OCI-LY7 (cell line): ENCODE measurements at regions of chr3 and their contacts with region 1.

Region 1: DNA sequence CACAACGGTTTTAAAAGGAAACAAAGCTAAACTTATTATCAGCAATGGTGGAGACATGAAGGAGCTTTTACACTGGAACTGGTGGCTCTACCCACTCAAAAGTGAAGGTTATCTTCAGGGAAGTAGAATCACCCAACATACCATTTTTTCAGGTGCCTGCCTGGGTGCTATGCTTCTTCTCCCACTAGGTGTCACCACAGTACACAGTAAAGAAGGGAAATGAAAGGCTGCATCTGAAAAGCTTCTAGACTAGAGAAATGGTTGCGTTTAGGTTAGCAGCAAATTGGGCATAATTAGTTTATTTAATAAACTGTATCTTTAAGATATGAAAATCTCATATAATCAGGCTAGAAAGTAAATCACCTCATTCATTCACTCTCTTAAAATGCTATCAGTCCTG is 47.0 kb upstream of the SELENOK start:
- DNase-seq: peak; percentile 54
- H3K4me3 ChIP-seq: no peak overlapping the region
- H3K27ac ChIP-seq: no peak overlapping the region
- H3K4me1 ChIP-seq: no peaks in the 10 kb centered on the region
- CTCF ChIP-seq: peak; percentile 91

Region 2: GRCh38 chr3:52171514-52172261 is 1767.0 kb before region 1 on chr3:
- CTCF ChIA-PET with region 1: no interaction called
- POLR2A ChIA-PET with region 1: no interaction called
- intact Hi-C with region 1: no loop called
- DNase-seq: no peak
- H3K4me3 ChIP-seq: no peak overlapping the region
- H3K27ac ChIP-seq: no peak overlapping the region
- H3K4me1 ChIP-seq: no peaks in the 10 kb centered on the region
- CTCF ChIP-seq: no peak

Region 3: DNA sequence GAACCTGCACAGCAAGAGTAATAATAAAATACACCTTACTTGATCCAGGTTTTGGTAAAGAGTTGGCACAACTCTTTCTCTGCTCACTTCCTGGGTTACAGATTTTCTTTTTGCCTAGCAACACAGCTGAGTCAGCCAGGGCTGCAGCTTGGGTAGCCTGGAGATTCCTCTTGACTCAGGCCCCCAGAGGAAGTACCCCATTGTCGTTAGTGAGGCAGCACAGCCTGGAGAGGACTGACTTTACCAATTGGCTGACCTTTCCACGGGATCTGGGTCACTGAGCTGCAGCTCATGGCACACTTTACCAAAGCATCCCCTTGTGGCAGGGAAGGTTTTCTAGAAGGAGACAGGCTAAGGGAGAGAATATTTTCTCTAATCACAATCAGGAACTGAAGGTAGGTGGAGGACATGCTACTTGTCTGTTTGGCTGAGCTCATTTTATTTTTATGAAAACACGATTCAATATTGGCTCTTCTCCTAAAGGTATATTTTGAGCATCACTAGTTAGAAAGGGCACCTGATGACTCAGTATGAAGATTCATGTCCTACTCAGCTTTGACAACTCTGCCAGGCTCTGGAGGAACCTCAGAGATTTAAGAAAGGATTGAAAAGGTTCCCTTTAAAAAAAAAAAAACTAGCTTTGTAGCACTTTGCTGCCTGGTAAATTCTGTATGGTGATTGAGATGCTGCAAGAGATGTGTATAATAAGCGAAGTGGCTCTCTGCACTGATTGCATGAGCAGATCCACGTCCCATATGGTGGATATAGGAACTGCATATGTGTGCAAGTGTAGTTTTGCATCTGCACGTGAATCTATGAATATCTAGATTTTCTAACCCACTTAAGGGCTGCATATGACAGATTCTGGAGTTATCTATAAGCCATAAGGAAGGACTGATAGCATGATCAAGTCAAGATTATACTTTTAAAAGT is 217.2 kb before region 1 on chr3:
- CTCF ChIA-PET with region 1: no interaction called
- POLR2A ChIA-PET with region 1: no interaction called
- intact Hi-C with region 1: no loop called
- DNase-seq: no peak
- H3K4me3 ChIP-seq: no peak overlapping the region
- H3K27ac ChIP-seq: no peak overlapping the region
- H3K4me1 ChIP-seq: no peaks in the 10 kb centered on the region
- CTCF ChIP-seq: no peak

Region 4: GRCh38 chr3:53881691-53882593 is 56.7 kb before region 1 on chr3 and contains the start of gene ACTR8:
- CTCF ChIA-PET with region 1: no interaction called
- POLR2A ChIA-PET with region 1: no interaction called
- intact Hi-C with region 1: no loop called
- DNase-seq: peak; percentile 89
- H3K4me3 ChIP-seq: peak within 1 kb of the TSS; percentile 82
- H3K27ac ChIP-seq: peak within 1 kb of the TSS; percentile 74
- H3K4me1 ChIP-seq: peaks cover 16% of the 10 kb centered on the region
- CTCF ChIP-seq: no peak
- total RNA-seq, gene ACTR8: 30.5 and 39.6 TPM in 2 replicates

Region 5: GRCh38 chr3:54146506-54147239 is 208.0 kb after region 1 on chr3:
- CTCF ChIA-PET with region 1: no interaction called
- POLR2A ChIA-PET with region 1: no interaction called
- intact Hi-C with region 1: loop called (anchors 1 kb)
- DNase-seq: peak; percentile 14
- H3K4me3 ChIP-seq: no peak overlapping the region
- H3K27ac ChIP-seq: no peak overlapping the region
- H3K4me1 ChIP-seq: no peaks in the 10 kb centered on the region
- CTCF ChIP-seq: peak; percentile 66

Region 6: GRCh38 chr3:54427941-54428871 is 489.6 kb after region 1 on chr3:
- CTCF ChIA-PET with region 1: no interaction called
- POLR2A ChIA-PET with region 1: no interaction called
- intact Hi-C with region 1: loop called (anchors 10 kb)
- DNase-seq: peak; percentile 57
- H3K4me3 ChIP-seq: no peak overlapping the region
- H3K27ac ChIP-seq: no peak overlapping the region
- H3K4me1 ChIP-seq: no peaks in the 10 kb centered on the region
- CTCF ChIP-seq: peak; percentile 97